ENCODE measurements at regions of chr9 and their contacts with region 1.

Region 1: GRCh38 chr9:126939821-126940221 is 25.2 kb downstream of the RALGPS1 start:
- DNase-seq: peak in 1 of 4 experiments; percentile 18
- ATAC-seq: no peak
- H3K4me3 ChIP-seq: no peak overlapping the region
- H3K27ac ChIP-seq: no peak overlapping the region
- H3K4me1 ChIP-seq: no peaks in the 10 kb centered on the region
- H3K27me3 ChIP-seq: peaks cover 3 to 9% of the 10 kb centered on the region in 2 experiments; a peak in 3 of 5 replicates
- CTCF ChIP-seq: no peak
- EP300 ChIP-seq: no peak
- POLR2A ChIP-seq: no peak
- RAD21 ChIP-seq: no peak

Region 2: DNA sequence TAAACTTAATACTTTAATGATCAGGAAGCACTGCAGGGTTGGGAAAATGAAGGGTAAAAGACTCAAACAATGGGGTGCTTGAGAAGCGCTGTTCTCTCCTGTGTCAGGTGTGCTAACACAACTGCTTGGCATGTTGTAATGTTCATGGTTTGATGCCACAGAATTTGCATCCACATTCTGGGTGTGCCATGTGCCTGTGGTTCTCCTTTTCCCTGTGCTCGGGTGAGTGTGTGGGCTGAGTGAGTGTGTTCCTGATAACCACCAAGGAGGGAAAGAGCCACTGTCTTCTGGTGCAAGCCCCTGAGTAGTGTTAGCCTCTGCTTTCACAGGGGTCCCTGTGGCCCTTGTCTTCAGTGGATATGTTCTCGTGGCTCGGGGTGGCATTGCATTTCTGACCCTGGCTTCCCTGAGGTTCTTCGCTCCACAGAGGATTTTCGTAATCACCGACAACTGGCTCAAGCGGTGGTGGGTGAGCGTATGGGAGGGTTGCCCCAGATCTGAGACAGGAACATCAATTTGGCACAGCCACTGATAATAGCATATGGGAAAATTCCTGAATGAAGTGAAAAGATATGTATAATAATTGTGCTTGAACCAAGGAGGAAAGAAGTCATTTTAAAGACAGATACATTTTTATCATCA is 511.2 kb before region 1 on chr9:
- CTCF ChIA-PET with region 1: no interaction called
- POLR2A ChIA-PET with region 1: no interaction called
- in situ Hi-C with region 1: no loop called
- intact Hi-C with region 1: no loop called
- DNase-seq: no peak
- ATAC-seq: no peak
- H3K4me3 ChIP-seq: no peak overlapping the region
- H3K27ac ChIP-seq: no peak overlapping the region
- H3K4me1 ChIP-seq: no peaks in the 10 kb centered on the region
- H3K27me3 ChIP-seq: peaks cover 5 to 52% of the 10 kb centered on the region in 2 experiments; a peak in 4 of 5 replicates
- CTCF ChIP-seq: no peak
- EP300 ChIP-seq: no peak
- POLR2A ChIP-seq: no peak
- RAD21 ChIP-seq: no peak

Region 3: DNA sequence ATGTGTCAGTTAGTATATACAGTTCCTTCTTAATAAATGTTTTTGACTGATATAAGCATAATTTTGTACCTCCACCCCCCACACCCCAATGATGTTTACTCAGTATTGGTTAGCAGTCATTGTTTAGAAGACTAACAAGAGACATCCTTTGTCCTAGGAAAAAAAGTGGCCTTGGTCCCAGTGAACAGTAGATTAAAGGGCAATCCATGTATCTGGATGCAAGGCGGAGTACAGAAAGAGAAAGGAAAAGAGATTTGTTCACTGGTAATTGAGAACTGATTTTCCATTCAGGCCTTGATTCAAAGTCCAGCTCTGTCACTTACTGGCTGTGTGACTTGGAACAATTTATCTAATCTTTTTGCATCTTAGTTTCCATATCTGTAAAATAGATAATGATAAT is 20.6 kb before region 1 on chr9:
- CTCF ChIA-PET with region 1: no interaction called
- POLR2A ChIA-PET with region 1: no interaction called
- in situ Hi-C with region 1: no loop called
- intact Hi-C with region 1: no loop called
- DNase-seq: no peak
- ATAC-seq: no peak
- H3K4me3 ChIP-seq: no peak overlapping the region
- H3K27ac ChIP-seq: no peak overlapping the region
- H3K4me1 ChIP-seq: peaks cover 0 to 11% of the 10 kb centered on the region in 2 experiments; a peak in 2 of 5 replicates
- H3K27me3 ChIP-seq: peaks cover 17 to 35% of the 10 kb centered on the region in 2 experiments
- CTCF ChIP-seq: no peak
- EP300 ChIP-seq: no peak
- POLR2A ChIP-seq: no peak
- RAD21 ChIP-seq: no peak

Region 4: GRCh38 chr9:127049044-127049443 is 109.2 kb after region 1 on chr9:
- CTCF ChIA-PET with region 1: no interaction called
- POLR2A ChIA-PET with region 1: no interaction called
- in situ Hi-C with region 1: no loop called
- intact Hi-C with region 1: no loop called
- DNase-seq: no peak
- ATAC-seq: no peak
- H3K4me3 ChIP-seq: no peak overlapping the region
- H3K27ac ChIP-seq: no peak overlapping the region
- H3K4me1 ChIP-seq: no peaks in the 10 kb centered on the region; a peak in 1 of 5 replicates
- H3K27me3 ChIP-seq: peaks cover 10 to 40% of the 10 kb centered on the region in 2 experiments
- CTCF ChIP-seq: no peak
- EP300 ChIP-seq: no peak
- POLR2A ChIP-seq: no peak
- RAD21 ChIP-seq: no peak; a peak in 1 of 4 replicates

Region 5: DNA sequence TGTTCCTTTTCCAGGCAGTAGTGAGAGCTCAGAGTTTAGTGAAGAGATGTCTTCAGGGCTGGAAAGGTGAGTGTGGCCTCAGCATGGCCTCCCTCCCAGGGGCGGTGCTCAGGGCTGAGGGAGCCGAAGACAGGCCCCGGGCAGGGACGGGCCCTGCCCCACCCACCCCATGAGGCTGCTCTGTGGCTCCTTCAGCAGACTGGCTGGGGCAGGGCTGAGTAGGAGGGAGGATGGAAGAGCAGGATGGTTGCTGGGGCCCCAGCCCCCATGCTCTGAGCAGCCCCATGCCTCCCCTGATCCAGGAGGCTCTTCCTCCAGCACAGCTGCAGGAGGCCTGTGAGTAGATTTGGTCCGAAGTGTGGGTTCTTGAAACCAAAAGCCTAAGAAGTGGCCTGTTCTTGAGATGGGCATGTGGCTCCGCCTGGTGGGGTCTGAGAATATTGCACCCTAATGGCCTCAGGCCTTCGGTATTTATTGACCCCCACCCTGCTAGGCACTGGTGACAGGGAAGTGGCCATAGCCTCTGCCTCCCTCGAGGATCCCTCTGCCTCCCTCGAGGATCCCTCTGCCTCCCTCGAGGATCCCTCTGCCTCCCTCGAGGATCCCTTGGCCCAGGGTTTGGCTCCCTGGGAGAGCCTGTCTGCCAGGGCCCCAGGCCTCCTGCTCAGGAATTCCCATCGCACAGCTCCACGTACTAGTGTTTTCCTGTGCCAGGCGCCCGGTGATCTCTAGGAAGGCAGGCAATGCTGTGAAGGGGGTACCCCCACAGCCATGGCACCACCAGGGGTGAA is 259.4 kb after region 1 on chr9:
- CTCF ChIA-PET with region 1: interaction called, 85 read pairs
- POLR2A ChIA-PET with region 1: interaction called, 3 read pairs
- in situ Hi-C with region 1: loop called (anchors 5 kb)
- intact Hi-C with region 1: loop called (anchors 1 kb)
- DNase-seq: peak; percentile 78 to 83 (median 80)
- ATAC-seq: peak; percentile 89
- H3K4me3 ChIP-seq: no peak overlapping the region
- H3K27ac ChIP-seq: no peak overlapping the region
- H3K4me1 ChIP-seq: peaks cover 0 to 10% of the 10 kb centered on the region in 2 experiments; a peak in 1 of 5 replicates
- H3K27me3 ChIP-seq: peaks cover 0 to 69% of the 10 kb centered on the region in 2 experiments; a peak in 3 of 5 replicates
- CTCF ChIP-seq: peak; percentile 89 to 97 (median 95)
- EP300 ChIP-seq: no peak
- POLR2A ChIP-seq: no peak
- RAD21 ChIP-seq: peak; percentile 98 to 99

Region 6: DNA sequence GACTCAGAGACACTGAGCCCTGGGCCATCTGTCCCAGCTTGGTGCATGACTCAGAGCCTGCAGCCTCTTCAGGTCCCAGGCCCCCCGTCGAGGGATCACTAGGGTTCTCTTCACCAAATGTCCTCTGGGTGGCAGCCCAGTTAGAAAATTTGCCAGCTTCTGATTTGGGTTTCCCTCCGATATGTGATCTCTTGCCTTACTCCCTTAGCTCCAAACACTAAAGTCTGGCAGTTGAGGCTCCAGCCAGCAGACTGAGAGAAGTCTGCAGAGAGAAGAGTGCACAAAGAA is 265.3 kb after region 1 on chr9:
- CTCF ChIA-PET with region 1: interaction called, 85 read pairs
- POLR2A ChIA-PET with region 1: interaction called, 3 read pairs
- in situ Hi-C with region 1: loop called (anchors 5 kb)
- intact Hi-C with region 1: no loop called
- DNase-seq: peak; percentile 49 to 59 (median 57)
- ATAC-seq: peak; percentile 66
- H3K4me3 ChIP-seq: no peak overlapping the region
- H3K27ac ChIP-seq: no peak overlapping the region
- H3K4me1 ChIP-seq: peaks cover 16 to 19% of the 10 kb centered on the region in 2 experiments; a peak in 4 of 5 replicates
- H3K27me3 ChIP-seq: peaks cover 4 to 80% of the 10 kb centered on the region in 2 experiments; a peak in 3 of 5 replicates
- CTCF ChIP-seq: peak; percentile 21 to 48 (median 44); a peak in 4 of 6 replicates
- EP300 ChIP-seq: no peak
- POLR2A ChIP-seq: no peak
- RAD21 ChIP-seq: peak in 1 of 2 experiments; percentile 44; a peak in 2 of 4 replicates